ENCODE measurements at regions of chr21 and their contacts with region 1.

Region 1: DNA sequence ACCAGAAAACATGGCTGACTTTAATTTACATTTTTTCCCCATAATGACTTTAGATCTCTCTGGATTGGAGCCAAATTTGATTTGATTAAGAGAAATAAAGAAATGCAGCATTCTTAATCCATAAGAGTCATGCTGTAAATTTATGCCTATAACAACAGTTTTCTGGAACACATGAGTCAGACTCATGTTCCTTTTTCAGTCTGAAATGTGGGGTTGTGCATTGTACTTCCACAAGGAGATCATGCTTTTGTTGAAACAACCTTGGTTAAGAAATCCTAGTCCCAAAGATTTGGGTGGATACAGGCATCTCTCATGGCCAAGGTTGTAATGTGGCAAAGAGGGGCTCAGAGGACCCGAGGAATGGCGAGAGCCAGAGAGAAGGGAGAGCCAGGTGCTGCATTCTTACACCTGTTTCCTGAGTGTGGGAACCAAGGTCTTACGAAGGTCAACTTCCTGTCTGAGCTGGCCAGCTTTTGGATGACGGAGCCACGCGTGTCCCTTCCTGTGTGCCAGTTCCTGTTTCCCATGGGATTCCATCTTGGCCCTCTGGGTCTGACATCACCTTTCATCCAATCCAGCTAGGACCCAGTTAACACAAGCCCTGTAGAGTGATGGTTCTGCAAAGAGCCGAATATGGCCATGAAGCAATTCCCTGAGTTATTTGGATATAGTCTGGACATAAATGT is 23.1 kb downstream of the CLDN14 start:
- DNase-seq: peak in 2 of 3 donors; percentile 10 to 33
- H3K4me3 ChIP-seq: no peak overlapping the region
- H3K4me3 Mint-ChIP-seq: no peak overlapping the region
- H3K27ac ChIP-seq: no peak overlapping the region
- H3K27ac Mint-ChIP-seq: no peak overlapping the region
- H3K4me1 ChIP-seq: no peaks in the 10 kb centered on the region
- H3K4me1 Mint-ChIP-seq: peaks cover 6% of the 10 kb centered on the region
- H3K27me3 ChIP-seq: no peaks in the 10 kb centered on the region
- H3K27me3 Mint-ChIP-seq: peaks cover 0 to 5% (median 4%) of the 10 kb centered on the region in 3 donors
- CTCF ChIP-seq: no peak

Region 2: DNA sequence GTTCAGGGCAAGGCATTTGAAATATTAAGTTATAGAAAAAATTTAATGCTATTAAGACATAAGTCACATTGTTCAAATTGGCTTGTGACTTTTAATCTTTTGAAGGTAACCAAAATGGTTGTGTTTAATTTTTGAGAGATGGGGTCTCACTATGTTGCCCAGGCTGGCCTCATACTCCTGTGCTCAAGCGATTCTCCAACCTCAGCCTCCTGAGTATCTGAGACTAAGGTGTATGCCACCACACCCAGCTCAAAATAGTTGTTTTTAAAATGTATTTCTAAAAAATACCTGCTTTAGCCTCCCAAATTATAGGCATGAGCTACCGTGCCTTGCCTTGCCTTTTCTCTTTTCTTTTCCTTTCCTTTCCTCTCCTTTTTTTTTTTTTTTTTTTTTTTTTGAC is 97.7 kb before region 1 on chr21:
- intact Hi-C with region 1: no loop called
- DNase-seq: no peak
- H3K4me3 ChIP-seq: no peak overlapping the region
- H3K4me3 Mint-ChIP-seq: no peak overlapping the region
- H3K27ac ChIP-seq: no peak overlapping the region
- H3K27ac Mint-ChIP-seq: peak overlapping the region in 1 of 7 donors; percentile 50
- H3K4me1 ChIP-seq: no peaks in the 10 kb centered on the region
- H3K4me1 Mint-ChIP-seq: no peaks in the 10 kb centered on the region
- H3K27me3 ChIP-seq: no peaks in the 10 kb centered on the region
- H3K27me3 Mint-ChIP-seq: peaks cover 0 to 1% (median 1%) of the 10 kb centered on the region in 3 donors
- CTCF ChIP-seq: no peak

Region 3: GRCh38 chr21:36419996-36420395 is 36.9 kb before region 1 on chr21:
- intact Hi-C with region 1: loop called in 1 of 2 experiments (anchors 5 kb)
- DNase-seq: peak; percentile 55 to 74 (median 74)
- H3K4me3 ChIP-seq: no peak overlapping the region
- H3K4me3 Mint-ChIP-seq: no peak overlapping the region
- H3K27ac ChIP-seq: no peak overlapping the region
- H3K27ac Mint-ChIP-seq: no peak overlapping the region
- H3K4me1 ChIP-seq: no peaks in the 10 kb centered on the region
- H3K4me1 Mint-ChIP-seq: peaks cover 8% of the 10 kb centered on the region
- H3K27me3 ChIP-seq: no peaks in the 10 kb centered on the region
- H3K27me3 Mint-ChIP-seq: peaks cover 0 to 4% (median 0%) of the 10 kb centered on the region in 3 donors
- CTCF ChIP-seq: peak; percentile 74